Activated CD4-positive, alpha-beta T cell treated with anti-CD3 and anti-CD28 coated beads, Interleukin-2, amount 10 ng/mL, durations not matched to agents 7 days and 5 days (primary cell): ENCODE measurements at regions of chr10 and their contacts with region 1.

Region 1: DNA sequence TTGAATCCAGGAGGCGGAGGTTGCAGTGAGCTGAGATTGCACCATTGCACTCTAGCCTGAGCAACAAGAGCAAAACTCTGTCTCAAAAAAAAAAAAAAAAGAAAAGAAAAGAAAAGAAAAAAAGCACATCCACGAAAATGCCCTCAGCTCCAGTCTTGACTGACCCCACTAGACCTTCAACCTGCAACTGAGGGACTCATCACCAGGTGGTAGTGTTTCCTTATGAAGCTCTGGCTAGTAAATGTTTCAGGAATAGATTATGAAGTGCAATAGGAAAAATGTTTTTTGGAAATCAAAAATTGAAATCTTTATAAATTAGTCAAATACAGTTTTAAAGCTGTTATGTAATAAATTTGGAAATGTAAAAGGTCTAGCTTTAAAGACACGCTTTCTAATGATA is 22.4 kb downstream of the TLL2 start:
- DNase-seq: no peak
- H3K4me3 Mint-ChIP-seq: no peak overlapping the region
- H3K27ac Mint-ChIP-seq: no peak overlapping the region
- H3K4me1 Mint-ChIP-seq: no peaks in the 10 kb centered on the region
- H3K27me3 Mint-ChIP-seq: peaks cover 5% of the 10 kb centered on the region

Region 2: GRCh38 chr10:96513698-96514561 is 22.6 kb after region 1 on chr10 and contains the start of gene TLL2:
- CTCF ChIA-PET with region 1: interaction called, 11 read pairs
- POLR2A ChIA-PET with region 1: no interaction called
- DNase-seq: peak; percentile 57
- H3K4me3 Mint-ChIP-seq: peak within 1 kb of the TSS; percentile 64
- H3K27ac Mint-ChIP-seq: no peak within 1 kb of the TSS
- H3K4me1 Mint-ChIP-seq: peaks cover 17% of the 10 kb centered on the region
- H3K27me3 Mint-ChIP-seq: peaks cover 61% of the 10 kb centered on the region
- total RNA-seq, gene TLL2: 0.17 TPM in 1 of 2 experiments, not detected in the other